PC-9 (cell line): ENCODE measurements at regions of chr1 and their contacts with region 1.

Region 1: GRCh38 chr1:179066471-179066870 is 15.4 kb upstream of the TOR3A start:
- DNase-seq: no peak
- H3K4me3 ChIP-seq: no peak overlapping the region
- H3K27ac ChIP-seq: no peak overlapping the region
- H3K4me1 ChIP-seq: peaks cover 9% of the 10 kb centered on the region
- H3K27me3 ChIP-seq: no peaks in the 10 kb centered on the region
- CTCF ChIP-seq: no peak

Region 2: GRCh38 chr1:179046808-179047635 is 19.4 kb before region 1 on chr1:
- CTCF ChIA-PET with region 1: no interaction called
- POLR2A ChIA-PET with region 1: no interaction called
- intact Hi-C with region 1: no loop called
- DNase-seq: no peak
- H3K4me3 ChIP-seq: no peak overlapping the region
- H3K27ac ChIP-seq: no peak overlapping the region
- H3K4me1 ChIP-seq: no peaks in the 10 kb centered on the region
- H3K27me3 ChIP-seq: no peaks in the 10 kb centered on the region
- CTCF ChIP-seq: no peak

Region 3: GRCh38 chr1:179547021-179547583 is 480.6 kb after region 1 on chr1:
- CTCF ChIA-PET with region 1: interaction called, 10 read pairs
- POLR2A ChIA-PET with region 1: no interaction called
- intact Hi-C with region 1: no loop called
- DNase-seq: no peak
- H3K4me3 ChIP-seq: no peak overlapping the region
- H3K27ac ChIP-seq: no peak overlapping the region
- H3K4me1 ChIP-seq: peaks cover 24% of the 10 kb centered on the region
- H3K27me3 ChIP-seq: no peaks in the 10 kb centered on the region
- CTCF ChIP-seq: no peak